Esophagus muscularis mucosa (tissue), 4 donors: ENCODE measurements at regions of chr9 and their contacts with region 1.

Region 1: DNA sequence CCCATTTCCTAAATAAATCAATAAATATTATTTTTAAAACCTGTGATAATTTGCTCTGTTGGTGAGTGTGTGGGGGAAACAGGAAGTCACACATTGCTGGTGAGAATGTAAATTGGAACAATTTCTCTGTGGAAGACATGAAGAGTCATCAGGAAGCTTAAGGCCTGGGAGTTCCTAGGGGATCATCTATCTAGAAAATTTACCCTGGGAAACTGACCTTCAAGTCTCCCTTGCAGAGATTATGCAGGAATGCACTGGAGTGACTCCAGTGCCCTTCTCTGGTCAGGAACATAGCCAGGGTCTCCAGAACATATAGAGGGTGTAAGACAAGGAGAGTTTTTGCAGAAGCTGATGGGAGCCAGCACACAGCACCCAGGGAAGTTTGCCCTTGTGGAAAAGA is 13.0 kb upstream of the GCNT1 start:
- DNase-seq: no peak
- H3K4me3 ChIP-seq: no peak overlapping the region
- H3K27ac ChIP-seq: no peak overlapping the region
- H3K4me1 ChIP-seq: peaks cover 0 to 7% (median 3%) of the 10 kb centered on the region in 4 donors
- H3K27me3 ChIP-seq: peaks cover 0 to 3% (median 0%) of the 10 kb centered on the region in 4 donors
- CTCF ChIP-seq: no peak
- EP300 ChIP-seq: no peak
- POLR2A ChIP-seq: no peak

Region 2: DNA sequence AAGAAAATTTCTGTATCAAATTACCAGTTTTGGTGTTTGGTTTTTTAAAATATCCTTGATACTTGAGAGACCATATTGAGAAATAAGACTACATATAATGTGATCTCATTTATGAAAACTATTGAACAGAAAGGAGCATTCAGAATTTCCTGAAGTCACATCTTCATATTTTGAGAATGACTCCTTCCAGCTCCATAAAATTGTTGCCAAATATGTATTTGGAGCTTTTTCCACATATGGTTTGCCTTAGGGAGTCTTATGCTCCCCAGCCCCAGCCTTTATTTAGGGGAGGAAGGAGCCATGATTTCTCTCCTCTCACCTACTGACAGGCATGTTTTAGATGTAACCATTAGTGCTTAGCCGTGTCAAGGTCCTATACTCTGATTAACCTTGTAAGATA is 64.1 kb after region 1 on chr9:
- intact Hi-C with region 1: no loop called
- DNase-seq: no peak
- H3K4me3 ChIP-seq: no peak overlapping the region
- H3K27ac ChIP-seq: no peak overlapping the region
- H3K4me1 ChIP-seq: no peaks in the 10 kb centered on the region
- H3K27me3 ChIP-seq: no peaks in the 10 kb centered on the region
- CTCF ChIP-seq: no peak
- EP300 ChIP-seq: no peak
- POLR2A ChIP-seq: no peak

Region 3: DNA sequence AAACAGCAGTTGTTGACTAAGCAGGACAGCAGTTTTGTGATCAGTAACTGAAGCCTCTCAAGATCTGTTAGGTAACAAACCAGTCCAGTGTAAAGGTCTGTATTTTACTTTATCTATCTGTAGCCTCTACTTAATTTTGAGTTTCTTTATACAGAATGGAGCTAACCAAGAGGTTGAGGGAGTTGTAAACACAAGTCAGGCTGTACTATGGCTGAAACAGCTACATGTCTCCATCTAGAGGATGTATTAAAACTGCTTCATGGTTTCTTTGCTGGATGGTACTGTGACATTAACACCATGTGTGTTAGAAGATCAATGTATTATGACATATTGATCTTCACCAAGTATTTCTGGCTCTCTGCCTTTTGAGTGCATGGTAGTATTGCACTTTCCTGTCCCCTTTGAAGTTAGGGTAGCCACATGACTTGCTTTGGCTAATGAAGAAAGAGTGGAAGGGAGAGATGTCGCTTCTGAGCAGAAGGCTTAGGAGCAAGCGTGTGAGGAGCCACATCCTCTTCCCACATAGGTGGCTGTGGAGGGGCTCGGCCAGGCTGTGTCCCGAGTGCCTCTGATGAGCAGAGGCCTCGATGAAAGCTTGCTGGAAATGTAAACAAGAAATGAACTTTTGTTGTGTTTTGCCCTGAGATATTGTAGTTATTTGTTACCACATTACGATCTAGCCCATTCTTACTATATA is 212.7 kb after region 1 on chr9:
- intact Hi-C with region 1: loop called (anchors 2 kb)
- DNase-seq: no peak
- H3K4me3 ChIP-seq: no peak overlapping the region
- H3K27ac ChIP-seq: peak overlapping the region in 2 of 4 donors; percentile 24 to 64
- H3K4me1 ChIP-seq: peaks cover 9 to 61% (median 54%) of the 10 kb centered on the region in 4 donors
- H3K27me3 ChIP-seq: no peaks in the 10 kb centered on the region
- CTCF ChIP-seq: peak; percentile 31 to 48 (median 34)
- EP300 ChIP-seq: no peak
- POLR2A ChIP-seq: no peak

Region 4: DNA sequence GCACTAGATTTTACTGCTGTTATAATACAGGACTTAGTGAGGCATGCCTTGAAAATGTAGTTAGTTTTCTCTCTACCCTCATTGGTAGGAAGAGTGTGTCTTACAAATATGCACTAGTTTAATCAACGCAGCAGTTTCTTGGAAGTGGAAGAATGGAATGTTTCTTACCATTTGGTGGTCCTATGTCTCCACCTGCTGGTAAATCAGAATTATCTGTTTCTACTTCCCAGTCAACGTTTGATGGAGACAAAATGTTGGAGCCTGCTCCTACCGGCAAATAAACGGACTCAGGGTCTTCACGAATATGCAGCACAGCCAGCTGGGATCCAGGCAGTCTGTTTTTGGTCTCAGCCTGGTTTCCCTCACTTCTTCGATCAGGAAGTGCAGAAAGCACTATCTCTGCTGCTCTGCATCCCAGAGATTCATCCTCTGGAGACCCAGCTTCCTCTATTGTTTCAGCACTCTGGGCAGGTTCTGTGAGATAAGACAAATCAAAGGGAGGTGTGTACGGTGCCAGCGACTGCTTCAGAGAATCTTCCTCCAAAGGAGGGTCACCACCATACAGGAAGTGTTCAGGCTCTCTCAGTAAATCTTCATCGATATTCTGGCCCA is 258.7 kb after region 1 on chr9:
- intact Hi-C with region 1: loop called (anchors 2 kb)
- DNase-seq: no peak
- H3K4me3 ChIP-seq: no peak overlapping the region
- H3K27ac ChIP-seq: peak overlapping the region in 1 of 4 donors; percentile 19
- H3K4me1 ChIP-seq: peaks cover 0 to 52% (median 43%) of the 10 kb centered on the region in 4 donors
- H3K27me3 ChIP-seq: no peaks in the 10 kb centered on the region
- CTCF ChIP-seq: peak; percentile 55 to 64 (median 59)
- EP300 ChIP-seq: no peak
- POLR2A ChIP-seq: no peak

Region 5: DNA sequence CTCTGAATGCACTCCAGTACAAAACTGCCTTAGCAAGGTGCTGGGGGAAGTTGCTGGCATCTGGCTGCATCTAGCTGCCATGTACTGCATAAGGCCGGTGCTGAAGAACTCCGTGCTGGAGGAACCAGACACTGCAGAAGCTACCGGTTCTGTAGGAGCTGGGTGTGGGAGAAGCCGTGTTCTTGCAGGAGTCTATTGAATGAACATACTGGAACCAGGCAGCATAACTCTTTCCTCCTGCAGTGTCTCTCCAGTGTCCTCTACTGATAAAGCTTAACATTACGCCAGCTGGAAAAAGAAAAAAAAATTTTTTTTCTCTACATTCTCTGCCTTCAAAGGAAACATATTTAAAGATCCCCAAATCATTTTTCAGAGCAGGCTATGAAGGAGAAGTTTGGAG is 769.9 kb after region 1 on chr9:
- intact Hi-C with region 1: no loop called
- DNase-seq: no peak
- H3K4me3 ChIP-seq: no peak overlapping the region
- H3K27ac ChIP-seq: no peak overlapping the region
- H3K4me1 ChIP-seq: peaks cover 0 to 16% (median 11%) of the 10 kb centered on the region in 4 donors
- H3K27me3 ChIP-seq: no peaks in the 10 kb centered on the region
- CTCF ChIP-seq: peak in 1 of 3 experiments; percentile 37
- EP300 ChIP-seq: no peak
- POLR2A ChIP-seq: no peak